ENCODE measurements at regions of chr11 and their contacts with region 1.

Region 1: GRCh38 chr11:111512296-111513239 is at the start of gene BTG4:
- DNase-seq: peak in 8 of 9 donors; percentile 2 to 38 (median 12)
- ATAC-seq: peak; percentile 53
- H3K4me3 ChIP-seq: no peak within 1 kb of the TSS
- H3K4me3 Mint-ChIP-seq: peak within 1 kb of the TSS; percentile 22 to 83 (median 66)
- H3K27ac ChIP-seq: no peak within 1 kb of the TSS
- H3K27ac Mint-ChIP-seq: peak within 1 kb of the TSS in 1 of 9 donors; percentile 44
- H3K4me1 ChIP-seq: peaks cover 0 to 3% of the 10 kb centered on the region in 2 donors
- H3K4me1 Mint-ChIP-seq: peaks cover 0 to 19% (median 12%) of the 10 kb centered on the region in 7 donors
- H3K27me3 ChIP-seq: peaks cover 5 to 10% of the 10 kb centered on the region in 2 donors
- H3K27me3 Mint-ChIP-seq: peaks cover 48 to 69% (median 54%) of the 10 kb centered on the region in 5 donors
- total RNA-seq, gene BTG4: not detected

Region 2: DNA sequence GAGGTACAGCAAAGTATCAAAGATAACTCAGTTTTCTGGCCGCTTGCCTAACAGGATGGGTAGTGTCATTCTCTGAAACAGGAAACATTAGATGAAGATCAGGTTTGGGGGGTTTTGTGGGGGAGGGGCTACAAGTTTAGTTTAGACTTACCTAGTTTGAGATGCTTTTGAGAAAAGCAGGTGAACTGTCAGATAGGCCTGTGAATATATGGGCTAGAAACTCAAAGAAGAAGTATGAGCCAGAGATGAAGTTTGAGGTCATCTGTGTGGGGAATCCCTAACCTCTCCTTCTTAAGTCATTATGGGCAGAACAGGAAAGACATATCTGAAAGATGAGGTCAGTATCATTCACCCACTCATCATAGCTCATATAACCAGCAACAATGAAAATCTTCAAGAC is 13.9 kb after region 1 on chr11:
- CTCF ChIA-PET with region 1: no interaction called
- POLR2A ChIA-PET with region 1: no interaction called
- intact Hi-C with region 1: loop called in 1 of 2 experiments (anchors 2 kb)
- DNase-seq: no peak
- ATAC-seq: peak; percentile 45
- H3K4me3 ChIP-seq: no peak overlapping the region
- H3K4me3 Mint-ChIP-seq: no peak overlapping the region
- H3K27ac ChIP-seq: no peak overlapping the region
- H3K27ac Mint-ChIP-seq: peak overlapping the region in 1 of 9 donors; percentile 19
- H3K4me1 ChIP-seq: peaks cover 0 to 6% of the 10 kb centered on the region in 2 donors
- H3K4me1 Mint-ChIP-seq: peaks cover 9 to 40% (median 14%) of the 10 kb centered on the region in 7 donors
- H3K27me3 ChIP-seq: no peaks in the 10 kb centered on the region
- H3K27me3 Mint-ChIP-seq: peaks cover 0 to 17% (median 8%) of the 10 kb centered on the region in 5 donors

Region 3: GRCh38 chr11:111540114-111540936 is 27.8 kb after region 1 on chr11 and contains the start of gene LAYN:
- CTCF ChIA-PET with region 1: no interaction called
- POLR2A ChIA-PET with region 1: no interaction called
- intact Hi-C with region 1: loop called (anchors 1 to 2 kb)
- DNase-seq: peak in 7 of 9 donors; percentile 16 to 40 (median 22)
- ATAC-seq: peak; percentile 49
- H3K4me3 ChIP-seq: peak within 1 kb of the TSS; percentile 31
- H3K4me3 Mint-ChIP-seq: peak within 1 kb of the TSS; percentile 74 to 88 (median 82)
- H3K27ac ChIP-seq: no peak within 1 kb of the TSS
- H3K27ac Mint-ChIP-seq: peak within 1 kb of the TSS; percentile 9 to 85 (median 54)
- H3K4me1 ChIP-seq: peaks cover 4 to 20% of the 10 kb centered on the region in 2 donors
- H3K4me1 Mint-ChIP-seq: peaks cover 14 to 38% (median 30%) of the 10 kb centered on the region in 7 donors
- H3K27me3 ChIP-seq: peaks cover 3 to 4% of the 10 kb centered on the region in 2 donors
- H3K27me3 Mint-ChIP-seq: peaks cover 42 to 81% (median 60%) of the 10 kb centered on the region in 5 donors
- total RNA-seq, gene LAYN: 0.27 to 8.7 (median 0.87) TPM

Measured in naive thymus-derived CD4-positive, alpha-beta T cell (primary cell).